ENCODE measurements at regions of chr12 and their contacts with region 1.

Region 1: DNA sequence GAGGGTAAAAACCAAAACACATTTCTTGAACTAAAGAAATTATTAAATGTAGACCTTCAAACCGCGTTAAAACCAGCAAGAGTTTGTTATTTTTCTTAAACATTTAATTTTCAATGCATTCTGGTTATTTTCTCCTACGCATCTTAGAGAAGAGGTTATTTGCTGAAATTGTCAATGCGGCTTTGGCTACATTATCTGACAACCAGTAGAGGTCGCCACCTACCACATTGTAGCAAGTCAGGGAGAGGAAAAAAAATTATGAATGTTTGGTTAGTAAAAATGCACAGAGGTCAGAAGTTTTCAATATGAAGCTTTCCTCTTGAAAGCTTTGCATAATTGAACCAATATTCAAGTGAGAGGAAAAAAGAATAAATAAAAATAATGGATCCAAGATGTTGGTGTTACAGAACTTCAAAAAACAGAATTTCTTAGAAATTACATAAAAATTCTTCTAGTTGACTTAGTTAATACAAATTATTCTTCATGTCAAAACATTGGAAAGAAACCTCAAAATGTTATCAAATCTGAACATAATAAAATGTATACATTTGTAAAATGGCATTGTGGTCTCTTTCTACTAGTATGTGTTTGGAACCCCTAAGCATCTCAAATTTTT is 159.4 kb upstream of the TMTC2 start:
- DNase-seq: peak in 1 of 2 donors; percentile 21
- ATAC-seq: no peak
- H3K4me3 ChIP-seq: no peak overlapping the region
- H3K27ac ChIP-seq: no peak overlapping the region
- H3K4me1 ChIP-seq: no peaks in the 10 kb centered on the region
- H3K27me3 ChIP-seq: peaks cover 0 to 9% (median 0%) of the 10 kb centered on the region in 7 donors
- CTCF ChIP-seq: peak in 8 of 9 donors; percentile 63 to 87 (median 82)

Region 2: DNA sequence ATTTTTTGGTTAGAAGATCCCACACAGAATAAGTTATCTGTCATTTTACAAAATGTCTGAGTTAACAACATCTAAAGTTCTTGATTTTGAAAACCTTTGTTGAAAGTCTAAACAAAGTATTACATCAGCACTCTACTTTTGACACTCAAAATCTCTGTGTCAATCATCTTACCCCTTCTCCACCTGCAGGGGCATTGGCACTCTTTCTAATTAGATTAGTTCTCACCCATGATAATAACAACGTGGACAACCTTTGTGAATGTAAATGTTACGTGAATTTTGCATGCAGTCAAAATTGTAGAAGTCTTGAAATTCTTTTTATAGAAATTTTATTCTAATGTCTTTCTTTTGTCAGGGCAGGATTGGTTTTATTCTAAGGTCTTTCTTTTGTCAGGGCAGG is 734.6 kb before region 1 on chr12:
- intact Hi-C with region 1: no loop called
- DNase-seq: no peak
- ATAC-seq: no peak
- H3K4me3 ChIP-seq: no peak overlapping the region
- H3K27ac ChIP-seq: no peak overlapping the region
- H3K4me1 ChIP-seq: no peaks in the 10 kb centered on the region
- H3K27me3 ChIP-seq: no peaks in the 10 kb centered on the region
- CTCF ChIP-seq: no peak

Region 3: DNA sequence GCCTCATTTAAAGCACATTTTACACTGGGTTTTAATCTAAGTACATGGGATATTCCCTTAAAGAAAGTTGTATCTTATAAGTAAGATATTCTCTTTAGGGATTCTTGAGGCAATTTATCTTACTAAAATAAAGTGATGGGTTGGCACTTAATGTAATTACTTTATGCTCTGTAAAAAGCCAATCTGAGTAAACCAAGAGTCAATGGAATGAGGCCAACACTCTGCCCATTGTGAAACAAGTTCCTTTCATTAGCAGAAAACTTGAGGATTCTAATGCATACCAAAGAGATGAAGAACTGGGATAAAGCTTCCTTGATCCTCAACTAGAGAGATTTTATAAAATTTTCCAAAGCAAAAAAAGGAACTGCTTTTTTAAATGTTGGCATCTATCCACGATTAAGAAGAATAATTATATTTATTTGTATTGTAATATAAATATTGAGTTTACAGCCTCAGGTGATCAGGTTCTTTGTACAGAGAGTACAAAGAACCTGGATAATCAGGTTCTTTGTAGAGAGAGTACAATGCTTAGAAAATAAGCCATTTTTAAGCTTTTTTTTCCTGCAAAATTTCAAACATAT is 47.7 kb before region 1 on chr12:
- intact Hi-C with region 1: no loop called
- DNase-seq: no peak
- ATAC-seq: no peak
- H3K4me3 ChIP-seq: no peak overlapping the region
- H3K27ac ChIP-seq: no peak overlapping the region
- H3K4me1 ChIP-seq: no peaks in the 10 kb centered on the region
- H3K27me3 ChIP-seq: no peaks in the 10 kb centered on the region
- CTCF ChIP-seq: no peak

Region 4: DNA sequence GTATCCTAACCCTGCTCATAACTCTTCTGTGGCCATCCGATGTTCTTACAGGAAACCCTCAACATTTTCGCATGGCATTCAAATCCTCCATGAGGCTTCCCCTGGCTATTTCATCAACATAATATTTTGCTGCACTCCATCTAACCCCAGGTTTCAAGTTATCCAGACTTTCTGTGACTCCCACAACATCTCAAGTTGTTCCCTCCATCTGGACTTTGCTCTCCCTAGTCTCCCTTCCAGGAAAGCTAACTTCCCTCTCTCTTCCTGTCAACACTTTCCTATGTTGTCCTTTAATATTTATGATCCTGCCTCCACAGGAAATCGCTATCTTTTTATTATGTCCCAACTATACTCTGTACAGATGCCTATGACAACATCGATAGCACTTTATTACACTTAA is 22.9 kb before region 1 on chr12:
- intact Hi-C with region 1: loop called in 1 of 10 experiments (anchors 2 kb)
- DNase-seq: no peak
- ATAC-seq: no peak
- H3K4me3 ChIP-seq: no peak overlapping the region
- H3K27ac ChIP-seq: no peak overlapping the region
- H3K4me1 ChIP-seq: no peaks in the 10 kb centered on the region
- H3K27me3 ChIP-seq: no peaks in the 10 kb centered on the region
- CTCF ChIP-seq: no peak

Region 5: DNA sequence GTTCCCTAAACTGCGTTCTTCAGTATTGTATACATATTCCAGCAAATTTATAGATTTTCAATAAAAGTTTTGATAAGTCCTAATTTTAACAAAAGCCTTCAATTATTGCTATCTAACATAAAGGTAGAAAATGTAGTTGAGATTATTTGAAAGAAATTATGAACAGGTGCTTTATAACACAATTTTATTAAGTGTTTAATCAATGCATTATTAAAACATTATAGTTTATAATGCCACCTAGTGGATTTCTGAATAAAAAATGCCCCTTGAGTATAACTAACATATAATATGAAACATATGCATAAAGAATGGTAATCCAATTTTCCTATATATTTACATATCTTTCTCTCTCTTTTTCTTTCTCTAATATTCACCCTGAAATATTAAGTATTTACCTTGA is 1870.0 kb after region 1 on chr12:
- intact Hi-C with region 1: loop called in 1 of 10 experiments (anchors 10 kb)
- DNase-seq: no peak
- ATAC-seq: no peak
- H3K4me3 ChIP-seq: no peak overlapping the region
- H3K27ac ChIP-seq: no peak overlapping the region
- H3K4me1 ChIP-seq: no peaks in the 10 kb centered on the region
- H3K27me3 ChIP-seq: no peaks in the 10 kb centered on the region
- CTCF ChIP-seq: peak in 5 of 9 donors; percentile 17 to 44 (median 24)

Measured in heart right ventricle (tissue), 16 donors.